ENCODE measurements at regions of chr2 and their contacts with region 1.

Region 1: GRCh38 chr2:24084386-24085361 is at the start of gene TP53I3:
- DNase-seq: peak; percentile 59 to 93 (median 80)
- ATAC-seq: peak; percentile 96
- H3K4me3 ChIP-seq: peak within 1 kb of the TSS; percentile 61
- H3K4me3 Mint-ChIP-seq: peak within 1 kb of the TSS; percentile 81 to 93 (median 88)
- H3K27ac ChIP-seq: peak within 1 kb of the TSS; percentile 28
- H3K27ac Mint-ChIP-seq: peak within 1 kb of the TSS in 8 of 9 donors; percentile 49 to 83 (median 65)
- H3K4me1 ChIP-seq: peaks cover 5 to 8% of the 10 kb centered on the region in 2 donors
- H3K4me1 Mint-ChIP-seq: peaks cover 10 to 21% (median 17%) of the 10 kb centered on the region in 7 donors
- H3K27me3 ChIP-seq: no peaks in the 10 kb centered on the region
- H3K27me3 Mint-ChIP-seq: no peaks in the 10 kb centered on the region
- total RNA-seq, gene TP53I3: 0.49 to 5.0 (median 1.7) TPM

Region 2: DNA sequence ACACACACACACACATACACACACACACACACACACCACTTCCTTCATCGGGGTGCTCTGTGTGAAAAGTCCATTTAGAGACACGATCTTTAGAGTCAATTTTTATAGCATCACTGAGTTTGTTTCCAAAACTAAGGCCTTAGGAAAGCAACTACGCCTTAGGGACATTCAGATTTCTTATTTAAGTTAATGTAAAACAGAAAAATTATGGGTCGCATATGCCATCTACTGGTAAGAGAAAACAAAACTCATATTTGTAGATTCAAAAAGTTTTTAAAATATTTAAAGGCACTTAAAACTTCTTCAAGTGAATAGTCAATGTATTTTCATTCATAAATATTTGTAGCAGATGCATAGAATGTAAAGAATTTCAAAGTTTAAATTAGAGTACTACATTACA is 323.9 kb before region 1 on chr2:
- CTCF ChIA-PET with region 1: no interaction called
- POLR2A ChIA-PET with region 1: no interaction called
- intact Hi-C with region 1: no loop called
- DNase-seq: no peak
- ATAC-seq: no peak
- H3K4me3 ChIP-seq: no peak overlapping the region
- H3K4me3 Mint-ChIP-seq: no peak overlapping the region
- H3K27ac ChIP-seq: no peak overlapping the region
- H3K27ac Mint-ChIP-seq: peak overlapping the region in 1 of 9 donors; percentile 57
- H3K4me1 ChIP-seq: peaks cover 0 to 8% of the 10 kb centered on the region in 2 donors
- H3K4me1 Mint-ChIP-seq: peaks cover 11 to 27% (median 19%) of the 10 kb centered on the region in 7 donors
- H3K27me3 ChIP-seq: no peaks in the 10 kb centered on the region
- H3K27me3 Mint-ChIP-seq: no peaks in the 10 kb centered on the region

Region 3: DNA sequence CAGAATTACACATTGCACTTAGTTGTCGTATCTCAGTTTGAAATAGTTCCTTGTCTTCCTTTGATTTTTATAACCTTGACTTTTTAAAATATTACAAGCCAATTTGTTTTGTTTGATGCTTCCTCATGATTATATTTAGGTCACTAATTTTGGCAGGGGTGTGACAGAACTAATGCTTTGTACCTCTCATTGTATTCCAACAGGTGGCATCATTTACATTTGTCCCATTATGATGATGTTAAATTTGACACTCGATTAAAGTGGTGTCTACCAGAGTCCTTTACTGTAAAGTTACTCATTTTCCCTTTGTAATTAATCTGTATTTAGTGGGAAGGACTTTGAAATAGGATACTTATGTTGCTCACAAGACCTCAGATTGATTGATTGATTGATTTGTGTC is 96.3 kb before region 1 on chr2:
- CTCF ChIA-PET with region 1: interaction called, 4 read pairs
- POLR2A ChIA-PET with region 1: no interaction called
- intact Hi-C with region 1: loop called (anchors 1 kb)
- DNase-seq: peak in 4 of 9 donors; percentile 8 to 26 (median 23)
- ATAC-seq: peak; percentile 60
- H3K4me3 ChIP-seq: no peak overlapping the region
- H3K4me3 Mint-ChIP-seq: no peak overlapping the region
- H3K27ac ChIP-seq: no peak overlapping the region
- H3K27ac Mint-ChIP-seq: peak overlapping the region in 1 of 9 donors; percentile 49
- H3K4me1 ChIP-seq: no peaks in the 10 kb centered on the region
- H3K4me1 Mint-ChIP-seq: peaks cover 0 to 3% (median 0%) of the 10 kb centered on the region in 7 donors
- H3K27me3 ChIP-seq: no peaks in the 10 kb centered on the region
- H3K27me3 Mint-ChIP-seq: no peaks in the 10 kb centered on the region

Region 4: DNA sequence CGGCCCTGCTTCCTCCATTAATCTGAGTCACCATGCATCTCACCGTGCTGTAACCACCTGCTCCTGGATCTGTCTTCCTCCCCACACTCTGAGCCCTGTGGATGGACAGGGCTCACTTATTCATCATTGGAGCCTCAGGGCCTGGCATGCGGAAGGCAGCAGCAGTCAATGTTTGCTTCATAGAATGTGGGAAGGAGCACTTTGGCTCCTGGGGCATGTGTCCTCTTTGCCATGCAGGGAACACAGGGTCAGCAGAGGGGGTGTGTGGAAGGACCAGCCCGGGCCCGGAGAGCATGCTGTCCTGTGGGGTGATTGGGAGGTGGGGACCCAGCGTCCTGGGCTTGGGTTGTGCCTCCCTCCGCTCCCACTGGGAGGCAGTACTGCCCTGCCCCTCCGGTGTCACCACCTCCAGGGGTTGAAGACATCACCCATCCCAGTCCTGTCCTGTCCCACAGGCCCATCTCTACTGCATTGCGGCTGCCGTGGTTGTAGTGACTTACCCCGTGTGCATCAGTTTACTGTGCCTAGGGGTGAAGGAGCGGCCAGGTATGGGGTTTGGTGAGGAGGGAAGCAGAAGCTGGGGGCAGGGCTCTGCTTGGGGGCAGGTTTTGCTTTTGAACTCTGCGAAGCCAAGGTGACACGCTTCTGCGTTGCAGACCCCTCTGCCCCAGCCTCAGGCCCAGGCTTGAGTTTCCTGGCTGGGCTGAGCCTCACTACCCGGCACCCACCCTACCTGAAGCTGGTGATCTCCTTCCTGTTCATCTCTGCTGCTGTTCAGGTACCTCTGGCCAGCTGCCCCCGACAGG is 63.3 kb before region 1 on chr2:
- CTCF ChIA-PET with region 1: no interaction called
- POLR2A ChIA-PET with region 1: no interaction called
- intact Hi-C with region 1: loop called in 1 of 2 experiments (anchors 1 kb)
- DNase-seq: no peak
- ATAC-seq: peak; percentile 45
- H3K4me3 ChIP-seq: no peak overlapping the region
- H3K4me3 Mint-ChIP-seq: no peak overlapping the region
- H3K27ac ChIP-seq: no peak overlapping the region
- H3K27ac Mint-ChIP-seq: no peak overlapping the region
- H3K4me1 ChIP-seq: no peaks in the 10 kb centered on the region
- H3K4me1 Mint-ChIP-seq: peaks cover 0 to 9% (median 0%) of the 10 kb centered on the region in 7 donors
- H3K27me3 ChIP-seq: no peaks in the 10 kb centered on the region
- H3K27me3 Mint-ChIP-seq: no peaks in the 10 kb centered on the region

Measured in naive thymus-derived CD4-positive, alpha-beta T cell (primary cell).